ENCODE measurements at regions of chr16 and their contacts with region 1.

Region 1: GRCh38 chr16:77236063-77236511 is 36.9 kb downstream of the SYCE1L start:
- DNase-seq: peak; percentile 74 to 89 (median 83)
- ATAC-seq: peak; percentile 100
- H3K4me3 ChIP-seq: peak overlapping the region; percentile 42
- H3K4me3 Mint-ChIP-seq: peak overlapping the region; percentile 57 to 87 (median 76)
- H3K27ac ChIP-seq: no peak overlapping the region
- H3K27ac Mint-ChIP-seq: peak overlapping the region in 2 of 9 donors; percentile 13 to 48
- H3K4me1 ChIP-seq: no peaks in the 10 kb centered on the region
- H3K4me1 Mint-ChIP-seq: peaks cover 0 to 6% (median 5%) of the 10 kb centered on the region in 7 donors
- H3K27me3 ChIP-seq: no peaks in the 10 kb centered on the region
- H3K27me3 Mint-ChIP-seq: peaks cover 12 to 30% (median 18%) of the 10 kb centered on the region in 5 donors

Region 2: GRCh38 chr16:77190478-77191258 is 45.4 kb before region 1 on chr16 and contains the start of gene MON1B:
- CTCF ChIA-PET with region 1: no interaction called
- POLR2A ChIA-PET with region 1: no interaction called
- intact Hi-C with region 1: loop called (anchors 1 kb)
- DNase-seq: peak; percentile 86 to 98 (median 97)
- ATAC-seq: peak; percentile 96
- H3K4me3 ChIP-seq: peak within 1 kb of the TSS; percentile 97
- H3K4me3 Mint-ChIP-seq: peak within 1 kb of the TSS; percentile 90 to 99 (median 96)
- H3K27ac ChIP-seq: peak within 1 kb of the TSS; percentile 86
- H3K27ac Mint-ChIP-seq: peak within 1 kb of the TSS; percentile 98 to 100 (median 100)
- H3K4me1 ChIP-seq: peaks cover 13 to 23% of the 10 kb centered on the region in 2 donors
- H3K4me1 Mint-ChIP-seq: peaks cover 36 to 55% (median 46%) of the 10 kb centered on the region in 7 donors
- H3K27me3 ChIP-seq: no peaks in the 10 kb centered on the region
- H3K27me3 Mint-ChIP-seq: peaks cover 0 to 10% (median 4%) of the 10 kb centered on the region in 5 donors
- total RNA-seq, gene MON1B: 60.8 to 87.2 (median 67.3) TPM

Region 3: GRCh38 chr16:77298638-77299360 is 62.7 kb after region 1 on chr16:
- CTCF ChIA-PET with region 1: no interaction called
- POLR2A ChIA-PET with region 1: no interaction called
- intact Hi-C with region 1: no loop called
- DNase-seq: no peak
- ATAC-seq: no peak
- H3K4me3 ChIP-seq: no peak overlapping the region
- H3K4me3 Mint-ChIP-seq: no peak overlapping the region
- H3K27ac ChIP-seq: no peak overlapping the region
- H3K27ac Mint-ChIP-seq: no peak overlapping the region
- H3K4me1 ChIP-seq: no peaks in the 10 kb centered on the region
- H3K4me1 Mint-ChIP-seq: no peaks in the 10 kb centered on the region
- H3K27me3 ChIP-seq: no peaks in the 10 kb centered on the region
- H3K27me3 Mint-ChIP-seq: peaks cover 0 to 9% (median 3%) of the 10 kb centered on the region in 5 donors

Region 4: DNA sequence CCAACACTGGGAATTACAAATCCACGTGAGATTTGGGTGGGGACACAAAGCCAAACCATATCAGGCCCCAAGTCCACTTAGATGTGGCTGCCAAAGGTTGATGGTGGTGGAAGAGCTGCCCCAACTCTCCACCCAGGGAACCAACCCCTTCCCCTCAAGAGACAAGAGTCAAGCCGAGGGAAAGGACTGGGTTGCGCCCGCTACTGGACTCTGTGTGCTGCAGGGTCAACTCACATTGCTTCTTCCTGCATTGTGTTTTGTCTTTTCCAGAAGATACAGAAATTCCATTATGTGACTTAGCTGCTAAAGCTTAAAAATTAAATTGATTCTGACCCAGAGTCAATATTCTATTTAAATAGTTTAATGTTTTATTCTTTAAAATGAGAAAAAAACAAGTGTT is 140.3 kb after region 1 on chr16:
- CTCF ChIA-PET with region 1: no interaction called
- POLR2A ChIA-PET with region 1: no interaction called
- intact Hi-C with region 1: loop called (anchors 1 kb)
- DNase-seq: no peak
- ATAC-seq: no peak
- H3K4me3 ChIP-seq: no peak overlapping the region
- H3K4me3 Mint-ChIP-seq: no peak overlapping the region
- H3K27ac ChIP-seq: no peak overlapping the region
- H3K27ac Mint-ChIP-seq: no peak overlapping the region
- H3K4me1 ChIP-seq: no peaks in the 10 kb centered on the region
- H3K4me1 Mint-ChIP-seq: no peaks in the 10 kb centered on the region
- H3K27me3 ChIP-seq: no peaks in the 10 kb centered on the region
- H3K27me3 Mint-ChIP-seq: peaks cover 0 to 12% (median 7%) of the 10 kb centered on the region in 5 donors

Region 5: DNA sequence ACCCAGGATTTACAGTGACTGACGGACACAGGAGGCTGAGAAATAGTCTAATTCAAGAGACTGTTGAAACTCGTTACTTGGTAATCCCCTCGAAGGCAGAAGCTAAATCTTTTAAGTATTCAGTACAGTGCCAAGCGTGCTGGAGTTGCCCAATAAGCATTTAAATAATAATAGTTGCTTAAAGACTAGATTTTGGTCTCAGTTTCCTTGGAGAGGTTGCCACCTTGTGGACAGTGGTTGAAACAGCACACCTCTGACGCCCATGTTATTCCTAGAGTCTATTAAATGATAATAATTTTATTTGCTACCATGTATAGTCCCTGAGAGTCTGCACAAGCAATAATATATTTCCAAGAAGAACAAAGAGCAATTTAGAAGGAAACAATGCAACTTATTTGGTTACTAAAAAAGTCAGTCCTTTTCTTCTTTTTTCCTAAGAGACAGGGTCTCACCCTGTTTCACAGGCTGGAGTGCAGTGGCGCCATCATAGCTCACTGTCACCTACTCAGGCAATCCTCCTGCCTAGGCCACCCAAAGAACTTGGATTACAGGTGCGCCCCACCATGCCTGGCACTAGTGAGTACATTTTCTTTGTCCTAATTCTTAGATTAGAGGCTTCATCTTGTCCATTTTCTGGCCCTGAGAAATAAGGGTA is 348.2 kb after region 1 on chr16:
- CTCF ChIA-PET with region 1: interaction called, 53 read pairs
- POLR2A ChIA-PET with region 1: no interaction called
- intact Hi-C with region 1: loop called (anchors 1 kb)
- DNase-seq: peak in 6 of 9 donors; percentile 16 to 45 (median 30)
- ATAC-seq: peak; percentile 67
- H3K4me3 ChIP-seq: no peak overlapping the region
- H3K4me3 Mint-ChIP-seq: no peak overlapping the region
- H3K27ac ChIP-seq: no peak overlapping the region
- H3K27ac Mint-ChIP-seq: no peak overlapping the region
- H3K4me1 ChIP-seq: no peaks in the 10 kb centered on the region
- H3K4me1 Mint-ChIP-seq: peaks cover 0 to 9% (median 0%) of the 10 kb centered on the region in 7 donors
- H3K27me3 ChIP-seq: peaks cover 0 to 4% of the 10 kb centered on the region in 2 donors
- H3K27me3 Mint-ChIP-seq: peaks cover 7 to 40% (median 29%) of the 10 kb centered on the region in 5 donors

Region 6: DNA sequence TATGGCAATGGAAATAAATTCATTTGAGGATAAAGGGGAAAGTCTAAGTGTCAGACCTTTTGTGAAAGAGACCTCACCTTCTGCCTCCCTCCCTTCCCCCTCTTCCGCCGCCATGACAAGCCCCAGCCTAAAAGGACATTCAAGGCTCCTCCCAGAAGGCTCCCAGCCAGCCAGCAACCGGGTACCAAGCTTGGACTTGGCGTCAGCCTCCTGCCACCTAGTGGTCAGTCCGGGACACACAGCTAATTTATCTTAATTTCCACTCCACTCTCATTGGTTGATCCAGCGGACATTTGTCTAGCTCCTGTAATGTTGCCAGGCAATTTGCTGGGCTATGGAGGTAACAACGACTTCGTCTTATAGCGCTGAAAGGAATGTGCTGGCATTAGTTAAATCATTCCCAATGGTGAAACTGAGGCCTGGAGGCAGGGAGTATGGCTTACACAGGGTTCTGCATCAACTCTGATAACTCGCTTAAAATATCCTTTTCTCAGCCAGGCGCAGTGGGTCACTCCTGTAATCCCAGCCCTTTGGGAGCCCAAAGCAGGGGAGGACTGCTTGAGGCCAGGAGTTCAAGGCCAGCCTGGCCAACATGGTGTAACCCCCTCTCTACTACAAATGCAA is 766.9 kb after region 1 on chr16:
- CTCF ChIA-PET with region 1: no interaction called
- POLR2A ChIA-PET with region 1: no interaction called
- intact Hi-C with region 1: loop called in 1 of 2 experiments (anchors 2 kb)
- DNase-seq: peak; percentile 15 to 69 (median 46)
- ATAC-seq: peak; percentile 86
- H3K4me3 ChIP-seq: no peak overlapping the region
- H3K4me3 Mint-ChIP-seq: no peak overlapping the region
- H3K27ac ChIP-seq: no peak overlapping the region
- H3K27ac Mint-ChIP-seq: peak overlapping the region in 1 of 9 donors; percentile 59
- H3K4me1 ChIP-seq: no peaks in the 10 kb centered on the region
- H3K4me1 Mint-ChIP-seq: peaks cover 0 to 6% (median 0%) of the 10 kb centered on the region in 7 donors
- H3K27me3 ChIP-seq: no peaks in the 10 kb centered on the region
- H3K27me3 Mint-ChIP-seq: peaks cover 0 to 18% (median 8%) of the 10 kb centered on the region in 5 donors

Measured in naive thymus-derived CD4-positive, alpha-beta T cell (primary cell).